Mammary epithelial cell (primary cell): ENCODE measurements at regions of chr1 and their contacts with region 1.

Region 1: GRCh38 chr1:23422241-23423030 is 2.1 kb downstream of the TCEA3 start:
- DNase-seq: peak; percentile 31
- H3K4me3 ChIP-seq: no peak overlapping the region
- H3K27ac ChIP-seq: no peak overlapping the region
- H3K4me1 ChIP-seq: peaks cover 20% of the 10 kb centered on the region
- H3K27me3 ChIP-seq: peaks cover 6% of the 10 kb centered on the region
- CTCF ChIP-seq: no peak

Region 2: DNA sequence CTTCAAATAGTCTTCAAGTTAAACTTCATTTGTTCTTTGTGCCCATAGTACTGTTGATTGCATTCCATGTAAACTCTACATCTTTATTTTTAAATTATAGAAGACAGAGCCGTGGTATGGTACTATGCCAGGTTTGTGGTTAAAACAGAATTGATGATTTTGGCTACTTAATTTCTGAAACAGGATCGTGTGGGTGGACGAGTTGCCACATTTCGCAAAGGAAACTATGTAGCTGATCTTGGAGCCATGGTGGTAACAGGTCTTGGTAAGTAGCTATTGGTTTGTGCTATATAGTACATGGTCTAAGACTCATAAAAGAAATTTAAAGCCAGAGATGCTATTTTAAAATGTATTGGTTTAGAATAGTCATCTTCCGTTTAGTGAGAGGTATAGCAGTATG is 365.1 kb before region 1 on chr1:
- CTCF ChIA-PET with region 1: no interaction called
- dilution Hi-C with region 1: no loop called
- in situ Hi-C with region 1: no loop called
- intact Hi-C with region 1: no loop called
- DNase-seq: no peak
- H3K4me3 ChIP-seq: no peak overlapping the region
- H3K27ac ChIP-seq: no peak overlapping the region
- H3K4me1 ChIP-seq: no peaks in the 10 kb centered on the region
- H3K27me3 ChIP-seq: no peaks in the 10 kb centered on the region
- CTCF ChIP-seq: no peak

Region 3: GRCh38 chr1:23344111-23344986 is 78.1 kb before region 1 on chr1 and contains the start of gene HNRNPR:
- CTCF ChIA-PET with region 1: no interaction called
- dilution Hi-C with region 1: loop called (anchors 5 kb)
- in situ Hi-C with region 1: no loop called
- intact Hi-C with region 1: no loop called
- DNase-seq: peak; percentile 100
- H3K4me3 ChIP-seq: peak within 1 kb of the TSS; percentile 78 to 89 (median 83)
- H3K27ac ChIP-seq: peak within 1 kb of the TSS; percentile 88
- H3K4me1 ChIP-seq: peaks cover 15% of the 10 kb centered on the region
- H3K27me3 ChIP-seq: no peaks in the 10 kb centered on the region
- CTCF ChIP-seq: peak in 1 of 2 donors; percentile 13
- total RNA-seq, gene HNRNPR: 35.2 to 133 TPM

Region 4: GRCh38 chr1:23478896-23479665 is 56.6 kb after region 1 on chr1:
- CTCF ChIA-PET with region 1: no interaction called
- dilution Hi-C with region 1: no loop called
- in situ Hi-C with region 1: no loop called
- intact Hi-C with region 1: loop called (anchors 5 kb)
- DNase-seq: no peak
- H3K4me3 ChIP-seq: no peak overlapping the region
- H3K27ac ChIP-seq: no peak overlapping the region
- H3K4me1 ChIP-seq: peaks cover 43% of the 10 kb centered on the region
- H3K27me3 ChIP-seq: no peaks in the 10 kb centered on the region
- CTCF ChIP-seq: no peak

Region 5: DNA sequence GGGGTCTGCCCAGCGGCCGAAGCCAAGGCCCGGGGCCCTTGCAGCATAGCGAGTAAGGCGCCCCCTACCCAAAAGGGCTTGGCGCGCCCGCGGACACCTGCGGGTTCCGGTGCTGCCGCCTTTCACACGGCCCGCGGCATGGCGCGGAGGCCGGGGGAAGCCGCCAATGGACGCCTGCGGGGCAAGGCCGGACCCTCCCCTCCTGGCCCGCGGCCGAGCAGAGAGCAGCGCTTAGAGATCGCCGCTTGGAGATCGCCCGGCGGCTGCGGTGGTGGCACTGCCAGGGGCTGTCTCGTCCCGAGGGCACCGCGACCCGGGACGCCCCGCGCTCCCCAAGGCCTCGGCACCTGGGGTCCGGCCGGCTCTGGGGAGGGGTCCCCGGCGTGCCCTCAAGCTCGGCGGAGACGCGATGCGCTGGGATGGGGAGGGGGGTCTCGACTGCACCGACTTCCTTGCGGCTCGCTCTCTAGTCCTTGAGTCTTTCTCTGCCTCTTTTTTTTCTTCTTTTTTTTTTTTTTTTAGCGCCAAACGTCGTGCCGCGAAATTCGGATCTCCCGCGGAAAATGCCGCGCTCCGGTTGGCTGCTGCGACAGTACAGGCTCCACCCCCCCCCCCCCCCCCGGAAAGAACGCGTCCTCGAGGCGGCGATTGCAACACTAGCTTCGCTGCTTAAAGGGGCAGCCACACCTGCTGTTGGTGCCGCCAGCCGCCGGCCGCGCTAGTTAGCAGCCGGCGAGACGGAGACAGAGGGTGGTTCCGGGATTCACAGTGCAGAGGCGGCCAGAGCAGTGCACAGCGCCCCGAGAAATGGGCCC is 108.5 kb after region 1 on chr1 and contains the start of gene E2F2:
- CTCF ChIA-PET with region 1: interaction called, 10 read pairs
- dilution Hi-C with region 1: no loop called
- in situ Hi-C with region 1: no loop called
- intact Hi-C with region 1: no loop called
- DNase-seq: peak; percentile 84
- H3K4me3 ChIP-seq: peak within 1 kb of the TSS; percentile 46 to 65 (median 58)
- H3K27ac ChIP-seq: peak within 1 kb of the TSS; percentile 12
- H3K4me1 ChIP-seq: peaks cover 34% of the 10 kb centered on the region
- H3K27me3 ChIP-seq: no peaks in the 10 kb centered on the region
- CTCF ChIP-seq: peak in 1 of 2 donors; percentile 31
- total RNA-seq, gene E2F2: 0.17 to 2.2 TPM